Endothelial cell of umbilical vein (primary cell): ENCODE measurements at regions of chr20 and their contacts with region 1.

Region 1: GRCh38 chr20:4069751-4070150 is 54.4 kb upstream of the RNF24 start:
- DNase-seq: no peak
- H3K4me3 ChIP-seq: no peak overlapping the region
- H3K27ac ChIP-seq: no peak overlapping the region
- H3K4me1 ChIP-seq: peaks cover 28% of the 10 kb centered on the region
- H3K27me3 ChIP-seq: no peaks in the 10 kb centered on the region
- CTCF ChIP-seq: no peak
- POLR2A ChIP-seq: no peak

Region 2: GRCh38 chr20:3828798-3829197 is 241.0 kb before region 1 on chr20:
- CTCF ChIA-PET with region 1: no interaction called
- POLR2A ChIA-PET with region 1: no interaction called
- dilution Hi-C with region 1: no loop called
- intact Hi-C with region 1: no loop called
- DNase-seq: no peak
- H3K4me3 ChIP-seq: no peak overlapping the region
- H3K27ac ChIP-seq: no peak overlapping the region
- H3K4me1 ChIP-seq: no peaks in the 10 kb centered on the region
- H3K27me3 ChIP-seq: no peaks in the 10 kb centered on the region
- CTCF ChIP-seq: no peak
- POLR2A ChIP-seq: no peak

Region 3: GRCh38 chr20:3888622-3889488 is 180.9 kb before region 1 on chr20 and contains the start of gene PANK2:
- CTCF ChIA-PET with region 1: interaction called, 20 read pairs
- POLR2A ChIA-PET with region 1: interaction called, 4 read pairs
- dilution Hi-C with region 1: no loop called
- intact Hi-C with region 1: loop called (anchors 1 kb)
- DNase-seq: peak; percentile 99
- H3K4me3 ChIP-seq: peak within 1 kb of the TSS; percentile 87 to 100 (median 99)
- H3K27ac ChIP-seq: peak within 1 kb of the TSS; percentile 93
- H3K4me1 ChIP-seq: peaks cover 40% of the 10 kb centered on the region
- H3K27me3 ChIP-seq: no peaks in the 10 kb centered on the region
- CTCF ChIP-seq: peak; percentile 28 to 46
- POLR2A ChIP-seq: peak; percentile 92
- total RNA-seq, gene PANK2: 54.3 and 55.3 TPM in 2 replicates

Region 4: GRCh38 chr20:3993109-3993508 is 76.6 kb before region 1 on chr20:
- CTCF ChIA-PET with region 1: interaction called, 15 read pairs
- POLR2A ChIA-PET with region 1: no interaction called
- dilution Hi-C with region 1: no loop called
- intact Hi-C with region 1: no loop called
- DNase-seq: no peak
- H3K4me3 ChIP-seq: no peak overlapping the region
- H3K27ac ChIP-seq: no peak overlapping the region
- H3K4me1 ChIP-seq: no peaks in the 10 kb centered on the region
- H3K27me3 ChIP-seq: no peaks in the 10 kb centered on the region
- CTCF ChIP-seq: no peak
- POLR2A ChIP-seq: no peak

Region 5: GRCh38 chr20:4036351-4036750 is 33.4 kb before region 1 on chr20:
- CTCF ChIA-PET with region 1: interaction called, 10 read pairs
- POLR2A ChIA-PET with region 1: no interaction called
- dilution Hi-C with region 1: no loop called
- intact Hi-C with region 1: no loop called
- DNase-seq: no peak
- H3K4me3 ChIP-seq: no peak overlapping the region
- H3K27ac ChIP-seq: no peak overlapping the region
- H3K4me1 ChIP-seq: no peaks in the 10 kb centered on the region
- H3K27me3 ChIP-seq: no peaks in the 10 kb centered on the region
- CTCF ChIP-seq: no peak
- POLR2A ChIP-seq: no peak

Region 6: GRCh38 chr20:4130404-4131189 is 60.8 kb after region 1 on chr20:
- CTCF ChIA-PET with region 1: no interaction called
- POLR2A ChIA-PET with region 1: no interaction called
- dilution Hi-C with region 1: no loop called
- intact Hi-C with region 1: no loop called
- DNase-seq: peak; percentile 68
- H3K4me3 ChIP-seq: no peak overlapping the region
- H3K27ac ChIP-seq: no peak overlapping the region
- H3K4me1 ChIP-seq: peaks cover 25% of the 10 kb centered on the region
- H3K27me3 ChIP-seq: no peaks in the 10 kb centered on the region
- CTCF ChIP-seq: no peak
- POLR2A ChIP-seq: no peak

Region 7: GRCh38 chr20:4171538-4172116 is 101.9 kb after region 1 on chr20:
- CTCF ChIA-PET with region 1: no interaction called
- POLR2A ChIA-PET with region 1: no interaction called
- dilution Hi-C with region 1: no loop called
- intact Hi-C with region 1: no loop called
- DNase-seq: peak; percentile 29
- H3K4me3 ChIP-seq: peak overlapping the region in 2 of 3 experiments; percentile 5 to 48
- H3K27ac ChIP-seq: peak overlapping the region; percentile 88
- H3K4me1 ChIP-seq: peaks cover 21% of the 10 kb centered on the region
- H3K27me3 ChIP-seq: no peaks in the 10 kb centered on the region
- CTCF ChIP-seq: no peak
- POLR2A ChIP-seq: no peak

Region 8: DNA sequence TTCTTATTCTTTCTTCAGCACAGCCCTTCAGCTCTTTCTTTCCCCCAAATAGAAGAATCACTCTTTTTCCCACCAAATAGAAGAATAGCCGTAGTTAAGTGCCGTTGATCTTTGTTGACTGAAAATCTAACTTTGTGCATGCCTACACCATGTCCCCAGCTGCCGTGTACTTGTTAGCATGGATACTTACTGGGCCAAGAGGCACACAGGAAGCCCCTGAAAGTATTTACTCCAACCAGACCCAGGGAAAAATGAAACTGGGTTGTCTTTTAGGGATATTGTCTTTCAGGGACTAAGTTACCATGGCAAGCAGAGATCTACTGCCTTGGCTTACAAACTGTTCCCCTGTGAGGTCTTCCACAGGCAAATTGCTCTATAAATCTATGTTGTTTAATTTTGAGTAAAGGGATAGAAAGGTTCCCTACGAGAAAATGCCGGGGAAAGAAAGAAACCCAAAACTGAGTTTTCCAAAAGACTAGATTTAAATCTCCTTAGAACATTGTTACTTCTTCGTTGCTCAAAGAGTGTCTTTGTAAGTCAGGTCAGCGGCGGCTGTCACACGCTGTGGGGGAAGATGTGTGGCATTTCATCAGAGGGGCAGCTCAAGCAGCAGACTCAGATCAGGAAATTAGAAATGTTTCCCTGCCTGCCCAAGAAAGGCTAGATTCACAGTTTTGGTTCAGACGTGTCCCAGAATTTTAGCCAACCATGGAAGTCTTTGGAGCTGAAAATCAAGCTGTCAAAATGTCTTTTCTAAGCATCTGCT is 463.8 kb after region 1 on chr20:
- CTCF ChIA-PET with region 1: no interaction called
- POLR2A ChIA-PET with region 1: no interaction called
- dilution Hi-C with region 1: no loop called
- intact Hi-C with region 1: no loop called
- DNase-seq: no peak
- H3K4me3 ChIP-seq: no peak overlapping the region
- H3K27ac ChIP-seq: no peak overlapping the region
- H3K4me1 ChIP-seq: no peaks in the 10 kb centered on the region
- H3K27me3 ChIP-seq: peaks cover 1 to 27% of the 10 kb centered on the region in 2 experiments
- CTCF ChIP-seq: no peak
- POLR2A ChIP-seq: no peak